Activated CD8-positive, alpha-beta T cell treated with anti-CD3 and anti-CD28 coated beads, Interleukin-2, amount 10 ng/mL, durations not matched to agents 7 days and 5 days (primary cell): ENCODE measurements at regions of chr10 and their contacts with region 1.

Region 1: DNA sequence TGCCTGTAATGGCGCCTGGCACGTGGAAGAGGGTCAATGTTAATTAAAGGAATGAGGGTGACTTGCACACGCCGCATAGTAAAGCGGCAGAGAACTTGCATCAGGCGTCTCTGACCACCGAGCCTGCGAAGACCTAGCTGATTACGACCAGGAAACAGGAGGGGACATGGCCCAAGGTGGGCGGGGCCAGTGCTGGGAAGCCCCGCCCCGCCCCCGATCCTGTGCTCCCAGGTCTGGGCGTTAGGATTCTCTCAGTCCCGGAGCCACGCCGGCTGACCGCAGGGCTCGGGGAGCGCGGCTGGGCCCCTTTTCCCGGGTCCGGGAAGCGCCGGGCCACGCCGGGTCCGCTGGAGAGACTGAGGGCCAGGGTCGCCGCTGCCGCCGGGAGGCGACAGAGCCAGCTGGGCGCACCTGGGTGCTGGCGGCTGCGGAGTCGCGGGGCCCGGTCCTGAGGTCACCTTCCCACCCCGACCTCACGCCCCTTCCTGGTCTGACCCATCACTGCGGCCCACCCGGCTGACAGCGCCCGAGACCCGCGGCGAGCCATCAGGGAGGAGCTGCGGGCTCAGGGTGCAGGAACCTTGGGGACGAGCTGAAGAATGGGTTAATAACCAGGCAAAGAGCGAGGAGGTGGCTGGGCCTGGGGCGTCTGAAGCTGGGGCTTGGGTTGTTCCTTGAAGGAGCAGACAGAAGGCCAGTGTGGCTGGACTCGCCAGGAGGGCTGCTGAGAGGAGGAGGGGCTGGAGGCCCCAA is 23.0 kb upstream of the GRID1 start:
- DNase-seq: no peak
- ATAC-seq: peak; percentile 66
- H3K4me3 Mint-ChIP-seq: peak overlapping the region; percentile 72
- H3K27ac Mint-ChIP-seq: no peak overlapping the region
- H3K4me1 Mint-ChIP-seq: peaks cover 3% of the 10 kb centered on the region
- H3K27me3 Mint-ChIP-seq: peaks cover 31% of the 10 kb centered on the region

Region 2: GRCh38 chr10:86244297-86245014 is 145.2 kb before region 1 on chr10:
- CTCF ChIA-PET with region 1: no interaction called
- POLR2A ChIA-PET with region 1: no interaction called
- DNase-seq: no peak
- ATAC-seq: no peak
- H3K4me3 Mint-ChIP-seq: no peak overlapping the region
- H3K27ac Mint-ChIP-seq: no peak overlapping the region
- H3K4me1 Mint-ChIP-seq: no peaks in the 10 kb centered on the region
- H3K27me3 Mint-ChIP-seq: no peaks in the 10 kb centered on the region

Region 3: GRCh38 chr10:86585037-86585725 is 195.6 kb after region 1 on chr10:
- CTCF ChIA-PET with region 1: interaction called, 16 read pairs
- POLR2A ChIA-PET with region 1: no interaction called
- DNase-seq: peak; percentile 79
- ATAC-seq: peak; percentile 96
- H3K4me3 Mint-ChIP-seq: no peak overlapping the region
- H3K27ac Mint-ChIP-seq: no peak overlapping the region
- H3K4me1 Mint-ChIP-seq: no peaks in the 10 kb centered on the region
- H3K27me3 Mint-ChIP-seq: no peaks in the 10 kb centered on the region

Region 4: GRCh38 chr10:86603256-86603655 is 213.6 kb after region 1 on chr10:
- CTCF ChIA-PET with region 1: no interaction called
- POLR2A ChIA-PET with region 1: no interaction called
- DNase-seq: no peak
- ATAC-seq: no peak
- H3K4me3 Mint-ChIP-seq: no peak overlapping the region
- H3K27ac Mint-ChIP-seq: no peak overlapping the region
- H3K4me1 Mint-ChIP-seq: no peaks in the 10 kb centered on the region
- H3K27me3 Mint-ChIP-seq: peaks cover 15% of the 10 kb centered on the region